ENCODE measurements at regions of chr12 and their contacts with region 1.

Region 1: DNA sequence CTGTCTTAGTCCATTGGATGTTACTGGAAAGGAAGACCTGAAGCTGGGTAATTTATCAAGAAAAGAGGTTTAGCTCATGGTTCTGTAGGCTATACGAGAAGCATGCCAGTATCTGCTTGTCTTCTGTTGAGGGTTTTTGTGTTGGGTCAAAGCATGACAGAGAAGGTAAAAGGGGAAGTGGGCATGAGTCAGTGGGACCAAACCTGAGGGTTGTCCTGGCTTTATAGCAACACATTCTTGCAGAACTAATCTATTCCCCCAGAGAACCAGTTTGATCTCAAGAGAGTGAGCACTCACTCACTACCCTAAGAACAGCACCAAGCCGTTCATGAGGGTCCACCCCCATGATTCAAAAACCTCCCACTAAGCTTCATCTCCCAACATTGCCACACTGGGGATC is 19.0 kb upstream of the KRAS start:
- H3K4me3 Mint-ChIP-seq: no peak overlapping the region
- H3K27ac Mint-ChIP-seq: no peak overlapping the region
- H3K4me1 Mint-ChIP-seq: peaks cover 7% of the 10 kb centered on the region
- H3K27me3 Mint-ChIP-seq: no peaks in the 10 kb centered on the region

Region 2: DNA sequence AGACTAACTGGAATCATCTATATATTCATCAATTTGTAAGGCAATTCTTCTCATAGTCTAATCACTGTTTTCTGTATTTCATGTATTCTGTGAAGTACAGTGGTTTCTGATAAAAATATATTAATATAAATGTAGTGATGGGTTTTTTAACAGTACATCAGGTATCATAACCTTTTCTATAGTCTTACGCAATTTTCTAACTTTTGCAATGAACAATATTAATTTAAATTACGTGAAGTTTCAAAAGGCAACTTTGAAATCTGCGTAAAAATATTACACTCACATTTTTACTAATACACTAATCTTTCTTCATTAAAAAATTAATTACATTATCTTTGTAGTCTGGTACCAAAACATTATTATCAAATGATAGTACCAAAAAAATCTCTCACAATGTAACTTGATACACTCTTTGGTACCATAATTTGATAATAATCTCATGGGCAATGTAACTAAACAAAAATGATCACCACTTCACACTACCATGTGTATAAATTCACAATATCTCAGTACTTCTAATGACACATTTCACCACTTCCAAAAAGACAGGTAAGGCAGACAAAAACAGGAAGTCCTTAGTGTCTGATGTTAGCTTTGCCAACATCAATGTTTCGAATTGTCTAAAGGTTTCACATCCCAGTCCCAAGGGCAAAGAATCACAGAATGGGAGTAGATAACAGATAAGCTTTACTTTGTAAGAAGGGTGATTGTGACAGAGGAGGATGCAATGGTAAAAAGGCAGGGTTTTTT is 83.5 kb before region 1 on chr12:
- intact Hi-C with region 1: no loop called
- H3K4me3 Mint-ChIP-seq: no peak overlapping the region
- H3K27ac Mint-ChIP-seq: no peak overlapping the region
- H3K4me1 Mint-ChIP-seq: no peaks in the 10 kb centered on the region
- H3K27me3 Mint-ChIP-seq: no peaks in the 10 kb centered on the region

Region 3: GRCh38 chr12:25320123-25321006 is 50.7 kb after region 1 on chr12:
- intact Hi-C with region 1: loop called (anchors 10 kb)
- H3K4me3 Mint-ChIP-seq: no peak overlapping the region
- H3K27ac Mint-ChIP-seq: no peak overlapping the region
- H3K4me1 Mint-ChIP-seq: peaks cover 9% of the 10 kb centered on the region
- H3K27me3 Mint-ChIP-seq: no peaks in the 10 kb centered on the region

Measured in dendritic cell treated with granulocyte-macrophage colony-stimulating factor and Interleukin-4, amounts not matched to agents 40 ng/mL and 50 ng/mL, for 4 days (primary cell).